MCF 10A (cell line): ENCODE measurements at regions of chr10 and their contacts with region 1.

Region 1: GRCh38 chr10:90847417-90847816 is 10.4 kb downstream of the HTR7 start:
- DNase-seq: peak; percentile 82
- H3K4me3 Mint-ChIP-seq: peak overlapping the region; percentile 33
- H3K27ac Mint-ChIP-seq: peak overlapping the region; percentile 80
- H3K4me1 Mint-ChIP-seq: peaks cover 35% of the 10 kb centered on the region
- H3K27me3 Mint-ChIP-seq: no peaks in the 10 kb centered on the region
- CTCF ChIP-seq: no peak

Region 2: GRCh38 chr10:89314676-89315075 is 1532.7 kb before region 1 on chr10:
- CTCF ChIA-PET with region 1: no interaction called
- POLR2A ChIA-PET with region 1: no interaction called
- intact Hi-C with region 1: no loop called
- DNase-seq: no peak
- H3K4me3 Mint-ChIP-seq: no peak overlapping the region
- H3K27ac Mint-ChIP-seq: no peak overlapping the region
- H3K4me1 Mint-ChIP-seq: no peaks in the 10 kb centered on the region
- H3K27me3 Mint-ChIP-seq: no peaks in the 10 kb centered on the region
- CTCF ChIP-seq: no peak

Region 3: GRCh38 chr10:90751107-90751997 is 96.1 kb before region 1 on chr10:
- CTCF ChIA-PET with region 1: interaction called, 13 read pairs
- POLR2A ChIA-PET with region 1: interaction called, 8 read pairs
- intact Hi-C with region 1: no loop called
- DNase-seq: peak; percentile 71
- H3K4me3 Mint-ChIP-seq: no peak overlapping the region
- H3K27ac Mint-ChIP-seq: no peak overlapping the region
- H3K4me1 Mint-ChIP-seq: peaks cover 16% of the 10 kb centered on the region
- H3K27me3 Mint-ChIP-seq: no peaks in the 10 kb centered on the region
- CTCF ChIP-seq: peak; percentile 91

Region 4: DNA sequence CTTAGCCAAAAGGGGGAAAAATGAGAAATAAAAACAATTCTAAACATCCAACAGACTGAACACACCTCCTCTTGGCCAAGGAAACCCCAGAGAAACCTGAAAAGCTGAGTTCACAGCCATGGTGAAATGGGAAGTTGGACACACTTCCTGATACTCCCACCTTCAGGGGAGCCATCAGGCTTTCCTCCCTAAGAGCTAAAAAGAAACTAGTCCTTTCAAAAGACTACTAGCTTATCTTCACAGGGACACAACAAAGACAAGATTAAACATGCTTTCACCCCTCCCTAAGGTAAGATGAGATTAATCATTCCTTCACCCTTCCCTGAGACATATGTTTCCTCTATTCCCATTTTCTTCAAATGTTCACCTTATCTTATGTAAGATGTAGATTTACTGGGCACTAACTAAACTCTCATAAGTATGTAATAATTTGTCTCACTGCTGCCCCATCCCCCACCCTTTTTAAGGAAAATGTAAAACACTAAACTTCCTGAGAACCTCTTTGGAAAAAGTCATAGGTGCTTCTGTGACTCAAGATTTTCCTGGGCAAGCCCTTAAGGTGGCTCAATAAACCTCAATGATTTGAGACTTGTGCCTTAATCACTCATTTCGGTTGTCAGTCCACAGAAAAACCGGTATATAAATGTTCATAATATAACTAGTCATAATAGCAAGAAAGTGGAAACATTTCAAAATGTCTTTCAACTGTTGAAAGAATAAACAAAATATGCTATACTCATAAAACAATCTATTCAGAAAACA is 30.1 kb before region 1 on chr10:
- CTCF ChIA-PET with region 1: no interaction called
- POLR2A ChIA-PET with region 1: interaction called, 25 read pairs
- intact Hi-C with region 1: no loop called
- DNase-seq: peak; percentile 41
- H3K4me3 Mint-ChIP-seq: peak overlapping the region; percentile 0
- H3K27ac Mint-ChIP-seq: peak overlapping the region; percentile 59
- H3K4me1 Mint-ChIP-seq: peaks cover 28% of the 10 kb centered on the region
- H3K27me3 Mint-ChIP-seq: no peaks in the 10 kb centered on the region
- CTCF ChIP-seq: no peak

Region 5: GRCh38 chr10:90834326-90834725 is 13.1 kb before region 1 on chr10:
- CTCF ChIA-PET with region 1: interaction called, 4 read pairs
- POLR2A ChIA-PET with region 1: interaction called, 95 read pairs
- intact Hi-C with region 1: no loop called
- DNase-seq: peak; percentile 46
- H3K4me3 Mint-ChIP-seq: no peak overlapping the region
- H3K27ac Mint-ChIP-seq: peak overlapping the region; percentile 76
- H3K4me1 Mint-ChIP-seq: peaks cover 28% of the 10 kb centered on the region
- H3K27me3 Mint-ChIP-seq: no peaks in the 10 kb centered on the region
- CTCF ChIP-seq: no peak

Region 6: DNA sequence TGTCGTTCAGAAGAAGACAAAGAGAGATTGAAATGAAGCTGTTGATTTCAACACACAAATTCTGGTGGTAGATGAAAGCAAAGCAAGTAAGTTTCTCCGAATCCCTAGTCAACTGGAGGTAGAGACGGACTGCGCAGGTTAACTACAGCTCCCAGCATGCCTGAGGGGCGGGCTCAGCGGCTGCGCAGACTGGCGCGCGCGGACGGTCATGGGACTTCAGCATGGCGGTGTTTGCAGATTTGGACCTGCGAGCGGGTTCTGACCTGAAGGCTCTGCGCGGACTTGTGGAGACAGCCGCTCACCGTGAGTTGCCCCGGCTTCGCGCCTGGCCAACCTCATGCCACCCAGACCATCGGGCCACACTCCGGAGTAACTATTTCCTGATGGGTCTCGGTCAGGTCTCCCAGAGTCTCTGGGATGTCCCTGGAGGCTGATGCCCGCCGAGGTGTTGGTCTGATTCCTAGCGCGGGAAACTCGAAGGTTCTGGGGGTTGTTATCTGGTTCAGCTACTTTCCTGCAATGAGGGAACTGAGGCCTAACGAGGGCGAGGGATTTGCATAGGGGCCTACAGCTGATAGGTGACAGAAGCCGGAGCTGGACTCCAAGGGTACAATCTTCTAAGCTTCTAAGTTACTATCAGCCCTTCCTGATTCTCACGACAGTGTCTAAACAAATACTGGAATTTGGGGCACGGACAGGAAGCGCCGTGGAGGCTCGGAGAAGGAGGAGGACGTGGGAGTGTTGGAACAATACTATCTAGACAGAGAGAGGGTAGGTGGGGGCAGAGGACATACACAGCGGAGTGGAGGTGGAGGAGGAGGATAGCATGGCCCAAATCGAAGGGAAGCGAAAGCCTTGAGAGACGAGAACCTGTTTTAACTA is 24.6 kb after region 1 on chr10 and contains the start of gene RPP30:
- CTCF ChIA-PET with region 1: no interaction called
- POLR2A ChIA-PET with region 1: interaction called, 49 read pairs
- intact Hi-C with region 1: no loop called
- DNase-seq: peak; percentile 83
- H3K4me3 Mint-ChIP-seq: peak within 1 kb of the TSS; percentile 98
- H3K27ac Mint-ChIP-seq: peak within 1 kb of the TSS; percentile 91
- H3K4me1 Mint-ChIP-seq: peaks cover 24% of the 10 kb centered on the region
- H3K27me3 Mint-ChIP-seq: no peaks in the 10 kb centered on the region
- CTCF ChIP-seq: no peak
- total RNA-seq, gene RPP30: 39.9 and 41.8 TPM in 2 replicates

Region 7: DNA sequence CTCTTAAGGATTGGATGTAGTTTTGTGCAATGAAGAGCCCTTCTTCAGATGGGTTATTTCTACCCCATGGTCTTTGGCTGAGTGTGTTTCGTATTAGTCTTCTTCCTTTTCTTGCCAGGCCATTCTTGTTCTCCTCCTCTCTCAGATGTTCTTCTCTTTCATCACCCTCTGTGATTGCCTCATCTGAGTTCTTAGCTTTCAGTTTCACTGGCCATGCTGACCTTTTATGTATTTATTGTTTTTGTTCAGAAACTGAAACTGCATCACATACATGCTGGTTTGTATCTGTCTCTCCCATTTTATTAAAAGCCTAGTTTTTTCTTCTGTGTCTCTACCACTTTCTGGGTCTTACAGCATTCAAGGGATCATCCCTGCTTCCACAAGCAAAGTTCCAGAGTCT is 351.4 kb after region 1 on chr10:
- CTCF ChIA-PET with region 1: no interaction called
- POLR2A ChIA-PET with region 1: no interaction called
- intact Hi-C with region 1: no loop called
- DNase-seq: peak; percentile 83
- H3K4me3 Mint-ChIP-seq: peak overlapping the region; percentile 31
- H3K27ac Mint-ChIP-seq: peak overlapping the region; percentile 47
- H3K4me1 Mint-ChIP-seq: peaks cover 19% of the 10 kb centered on the region
- H3K27me3 Mint-ChIP-seq: no peaks in the 10 kb centered on the region
- CTCF ChIP-seq: no peak